Esophagus muscularis mucosa (tissue), 4 donors: ENCODE measurements at regions of chr14 and their contacts with region 1.

Region 1: DNA sequence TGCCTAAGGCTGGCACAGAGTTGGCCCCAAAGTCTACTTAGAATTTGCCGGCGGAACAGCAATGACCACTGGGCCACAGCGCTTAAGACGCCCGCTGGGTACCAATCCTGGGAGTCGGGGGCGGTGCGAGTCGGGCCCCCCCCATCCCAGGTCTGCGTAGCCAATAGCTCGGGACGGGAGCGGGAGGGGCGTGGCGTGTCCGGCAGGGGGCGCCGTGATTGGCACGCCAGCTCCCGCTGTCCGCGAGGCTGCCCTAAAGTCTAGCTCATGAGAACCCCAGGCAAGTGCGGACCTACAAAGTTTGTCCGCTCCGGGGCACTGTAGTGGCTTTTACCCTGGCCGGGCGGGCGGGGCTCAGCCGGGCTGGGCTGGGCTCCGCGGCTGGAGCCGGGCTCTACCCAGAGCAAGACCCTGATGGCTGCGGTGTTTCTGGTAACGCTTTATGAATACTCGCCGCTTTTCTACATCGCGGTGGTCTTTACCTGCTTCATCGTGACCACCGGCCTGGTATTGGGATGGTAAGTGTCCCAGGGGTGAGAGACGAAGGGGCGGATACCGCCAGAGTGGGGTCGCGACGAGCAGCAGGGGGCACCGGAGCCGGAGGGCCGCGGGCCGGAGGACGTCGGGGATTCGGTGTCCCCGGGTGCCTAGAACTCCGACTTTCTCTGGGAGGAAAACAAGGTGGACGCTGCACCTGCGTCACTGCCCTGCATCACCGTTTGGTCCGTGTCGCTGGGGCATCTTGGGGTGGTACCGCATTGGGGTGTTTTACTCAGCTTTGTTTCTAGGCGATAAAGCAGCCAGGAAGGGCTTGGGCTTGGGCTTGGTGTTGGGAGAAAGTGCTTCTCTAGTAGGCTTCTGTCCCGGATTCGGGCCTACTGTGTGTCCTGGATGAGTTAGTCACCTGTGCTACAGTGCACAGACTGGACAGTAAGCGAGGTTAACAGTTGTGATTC is at the start of gene CGRRF1:
- DNase-seq: peak; percentile 99
- H3K4me3 ChIP-seq: peak within 1 kb of the TSS; percentile 77 to 93 (median 84)
- H3K27ac ChIP-seq: peak within 1 kb of the TSS; percentile 83 to 87 (median 86)
- H3K4me1 ChIP-seq: peaks cover 19 to 42% (median 30%) of the 10 kb centered on the region in 4 donors
- H3K27me3 ChIP-seq: no peaks in the 10 kb centered on the region
- CTCF ChIP-seq: peak; percentile 73 to 85 (median 79)
- EP300 ChIP-seq: no peak
- POLR2A ChIP-seq: peak; percentile 35
- total RNA-seq, gene CGRRF1: 10.7 to 28.2 (median 21.8) TPM

Region 2: GRCh38 chr14:54475187-54475899 is 34.5 kb before region 1 on chr14:
- intact Hi-C with region 1: no loop called
- DNase-seq: no peak
- H3K4me3 ChIP-seq: no peak overlapping the region
- H3K27ac ChIP-seq: no peak overlapping the region
- H3K4me1 ChIP-seq: peaks cover 5 to 27% (median 18%) of the 10 kb centered on the region in 4 donors
- H3K27me3 ChIP-seq: no peaks in the 10 kb centered on the region
- CTCF ChIP-seq: no peak
- EP300 ChIP-seq: no peak
- POLR2A ChIP-seq: no peak

Region 3: DNA sequence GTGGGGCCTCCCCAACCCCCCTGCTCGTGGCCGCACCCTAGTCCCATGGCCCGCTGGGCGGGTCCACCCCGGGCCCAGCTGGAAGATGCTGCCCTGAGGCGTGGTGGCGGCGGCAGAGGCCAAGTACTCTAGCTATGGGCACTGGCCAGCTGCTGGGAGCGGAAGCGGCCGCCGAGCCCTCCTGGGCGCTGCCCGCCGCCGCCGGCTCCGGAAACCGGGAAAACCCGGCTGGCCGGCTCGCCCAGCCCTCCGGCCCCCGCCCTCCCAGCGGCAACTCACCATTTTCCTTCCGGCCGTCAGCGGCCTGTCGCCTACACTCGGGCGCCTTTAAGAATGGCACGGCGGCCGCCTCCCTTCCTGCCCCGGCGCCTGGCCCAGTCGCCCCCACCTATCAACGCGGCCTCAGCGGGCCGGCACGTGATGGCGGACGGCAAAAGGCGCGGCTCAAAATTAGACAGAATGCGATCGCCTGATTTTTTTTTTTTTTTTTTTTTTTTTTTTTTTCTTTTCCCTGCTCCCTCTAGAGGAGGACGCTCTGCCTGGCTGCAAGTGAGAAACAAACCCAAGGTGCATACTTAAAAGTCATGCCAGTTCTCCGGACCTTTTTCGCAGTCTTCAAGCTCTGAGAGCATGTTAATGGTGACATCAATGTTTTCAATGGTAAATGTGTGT is 21.0 kb before region 1 on chr14 and contains the start of gene GMFB:
- intact Hi-C with region 1: loop called (anchors 2 kb)
- DNase-seq: peak; percentile 97
- H3K4me3 ChIP-seq: peak within 1 kb of the TSS; percentile 73 to 98 (median 80)
- H3K27ac ChIP-seq: peak within 1 kb of the TSS; percentile 91 to 96 (median 95)
- H3K4me1 ChIP-seq: peaks cover 28 to 49% (median 38%) of the 10 kb centered on the region in 4 donors
- H3K27me3 ChIP-seq: no peaks in the 10 kb centered on the region
- CTCF ChIP-seq: peak in 2 of 3 experiments; percentile 48 to 49
- EP300 ChIP-seq: no peak
- POLR2A ChIP-seq: peak; percentile 59
- total RNA-seq, gene GMFB: 21.4 to 49.4 (median 43.7) TPM